ENCODE measurements at regions of chr1 and their contacts with region 1.

Region 1: DNA sequence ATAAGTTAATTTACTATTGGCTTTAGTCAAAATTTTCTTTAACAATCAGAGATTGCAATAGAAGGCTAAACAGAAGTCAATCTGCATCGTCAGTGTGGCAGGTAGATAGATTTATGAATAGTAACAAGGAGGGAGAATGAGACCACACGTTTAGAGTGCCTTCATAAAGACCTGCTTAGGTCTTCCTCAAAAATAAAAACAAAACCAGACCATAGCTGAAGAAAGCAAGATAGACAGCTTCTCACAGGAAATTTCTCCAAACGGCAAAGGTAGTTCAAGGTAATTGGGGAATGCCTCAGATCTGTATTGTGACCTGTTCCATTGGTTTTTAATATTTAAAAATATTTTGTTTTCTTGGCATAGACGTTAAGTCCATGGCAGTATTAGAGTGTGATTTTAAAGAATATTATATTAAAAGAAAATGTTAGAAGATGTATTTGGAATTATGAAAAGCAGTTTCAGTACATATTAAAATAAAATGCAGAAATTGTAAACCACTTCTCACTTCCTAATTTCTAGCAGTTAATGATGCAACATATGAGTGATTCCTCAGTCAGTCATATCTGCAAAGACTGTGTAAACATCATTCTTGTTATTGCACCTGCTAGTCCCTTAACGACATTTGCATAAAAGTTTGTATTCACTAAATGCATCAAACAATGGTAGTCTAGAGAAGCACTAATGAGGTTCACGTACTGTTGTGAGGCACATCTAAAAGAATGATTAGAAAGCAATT is 278.0 kb downstream of the HLX start:
- DNase-seq: no peak
- H3K4me3 ChIP-seq: no peak overlapping the region
- CTCF ChIP-seq: no peak

Region 2: GRCh38 chr1:221100611-221101010 is 56.6 kb before region 1 on chr1:
- in situ Hi-C with region 1: loop called (anchors 5 kb)
- DNase-seq: peak; percentile 26
- H3K4me3 ChIP-seq: no peak overlapping the region
- CTCF ChIP-seq: no peak

Region 3: GRCh38 chr1:221203224-221204054 is 46.2 kb after region 1 on chr1:
- in situ Hi-C with region 1: no loop called
- DNase-seq: peak; percentile 66
- H3K4me3 ChIP-seq: no peak overlapping the region
- CTCF ChIP-seq: peak; percentile 89

Region 4: GRCh38 chr1:221227872-221228337 is 70.7 kb after region 1 on chr1:
- in situ Hi-C with region 1: no loop called
- DNase-seq: no peak
- H3K4me3 ChIP-seq: no peak overlapping the region
- CTCF ChIP-seq: no peak

Measured in astrocyte of the cerebellum (primary cell).